Posterior vena cava (tissue), 2 donors: ENCODE measurements at regions of chr1 and their contacts with region 1.

Region 1: GRCh38 chr1:97427371-97427770 is 493.5 kb downstream of the DPYD start:
- DNase-seq: no peak

Region 2: DNA sequence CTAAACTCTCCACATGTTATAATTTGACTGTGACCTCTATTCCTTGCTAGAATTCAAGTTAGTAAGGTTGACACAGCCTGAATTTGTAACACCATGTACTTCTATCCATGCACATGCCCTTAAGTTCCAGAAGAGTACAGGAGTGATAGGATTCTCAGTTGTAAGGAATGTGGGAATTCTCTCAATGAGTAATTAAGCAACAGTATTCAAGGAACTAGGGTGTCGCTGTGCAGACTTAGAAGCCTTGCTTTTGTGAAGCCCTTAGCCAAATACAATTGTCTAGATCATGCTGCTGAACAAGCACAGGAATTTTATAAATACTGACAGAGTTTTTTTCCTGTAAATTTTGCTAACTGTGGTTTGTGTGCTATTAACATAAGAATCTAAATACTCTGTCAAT is 982.1 kb before region 1 on chr1:
- intact Hi-C with region 1: loop called in 1 of 2 experiments (anchors 5 kb)
- DNase-seq: no peak